Activated naive CD4-positive, alpha-beta T cell treated with anti-CD3 and anti-CD28 coated beads for 36 hours (primary cell): ENCODE measurements at regions of chr9 and their contacts with region 1.

Region 1: GRCh38 chr9:98998441-98999151 is 54.9 kb downstream of the COL15A1 start:
- DNase-seq: peak; percentile 69
- H3K4me3 Mint-ChIP-seq: no peak overlapping the region
- H3K27ac Mint-ChIP-seq: no peak overlapping the region
- H3K4me1 Mint-ChIP-seq: peaks cover 21% of the 10 kb centered on the region
- H3K27me3 Mint-ChIP-seq: peaks cover 4% of the 10 kb centered on the region

Region 2: DNA sequence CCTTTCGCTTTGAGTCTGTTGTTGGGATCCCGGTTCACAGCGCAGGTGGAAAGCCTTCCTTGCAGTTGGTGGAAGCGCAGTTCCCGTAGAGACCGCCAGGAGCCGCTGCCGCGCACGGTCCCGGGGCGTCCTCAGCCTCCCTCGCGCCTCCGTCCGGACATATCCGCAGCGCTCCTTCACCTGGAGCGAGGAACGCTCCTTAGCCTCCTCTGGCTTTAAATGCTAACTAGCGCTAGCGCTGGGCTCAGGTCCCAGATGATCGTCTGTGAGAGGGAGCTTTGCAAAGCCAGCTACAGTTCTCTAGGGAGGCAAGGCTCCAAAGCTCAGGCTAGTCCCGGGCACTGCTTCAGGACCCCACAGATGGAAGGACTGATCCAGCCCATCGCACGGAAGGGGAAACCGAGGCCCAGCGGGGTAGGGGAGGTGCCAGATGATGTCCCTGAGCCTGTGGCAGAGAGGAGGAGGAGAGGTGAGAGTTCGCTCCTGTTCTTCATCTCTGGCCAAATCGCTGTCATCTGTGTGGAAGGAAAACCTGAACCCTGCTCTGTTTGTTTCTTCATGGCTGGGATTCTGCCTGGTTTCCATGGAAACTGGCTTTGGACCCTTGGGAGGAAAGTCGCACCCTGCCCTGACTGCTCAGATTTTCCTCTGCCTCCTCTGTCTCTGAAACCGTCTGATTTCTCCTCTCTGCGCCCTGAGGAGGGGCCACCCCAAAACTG is 23.4 kb before region 1 on chr9:
- CTCF ChIA-PET with region 1: interaction called, 24 read pairs
- intact Hi-C with region 1: loop called (anchors 1 kb)
- DNase-seq: peak; percentile 88
- H3K4me3 Mint-ChIP-seq: peak overlapping the region; percentile 7
- H3K27ac Mint-ChIP-seq: no peak overlapping the region
- H3K4me1 Mint-ChIP-seq: no peaks in the 10 kb centered on the region
- H3K27me3 Mint-ChIP-seq: peaks cover 5% of the 10 kb centered on the region

Region 3: GRCh38 chr9:99012942-99013512 is 14.4 kb after region 1 on chr9:
- CTCF ChIA-PET with region 1: interaction called, 26 read pairs
- intact Hi-C with region 1: no loop called
- DNase-seq: peak; percentile 26
- H3K4me3 Mint-ChIP-seq: no peak overlapping the region
- H3K27ac Mint-ChIP-seq: peak overlapping the region; percentile 72
- H3K4me1 Mint-ChIP-seq: peaks cover 20% of the 10 kb centered on the region
- H3K27me3 Mint-ChIP-seq: no peaks in the 10 kb centered on the region

Region 4: GRCh38 chr9:99023831-99024230 is 25.2 kb after region 1 on chr9:
- CTCF ChIA-PET with region 1: no interaction called
- intact Hi-C with region 1: no loop called
- DNase-seq: no peak
- H3K4me3 Mint-ChIP-seq: no peak overlapping the region
- H3K27ac Mint-ChIP-seq: no peak overlapping the region
- H3K4me1 Mint-ChIP-seq: peaks cover 20% of the 10 kb centered on the region
- H3K27me3 Mint-ChIP-seq: no peaks in the 10 kb centered on the region

Region 5: GRCh38 chr9:99092643-99093491 is 94.3 kb after region 1 on chr9:
- CTCF ChIA-PET with region 1: interaction called, 5 read pairs
- intact Hi-C with region 1: loop called (anchors 2 kb)
- DNase-seq: peak; percentile 60
- H3K4me3 Mint-ChIP-seq: no peak overlapping the region
- H3K27ac Mint-ChIP-seq: peak overlapping the region; percentile 9
- H3K4me1 Mint-ChIP-seq: peaks cover 21% of the 10 kb centered on the region
- H3K27me3 Mint-ChIP-seq: no peaks in the 10 kb centered on the region